Posterior cingulate gyrus (tissue), 11 donors: ENCODE measurements at regions of chr13 and their contacts with region 1.

Region 1: GRCh38 chr13:45047394-45048310 is 58.3 kb downstream of the GPALPP1 start:
- DNase-seq: peak; percentile 66 to 97 (median 82)

Region 2: DNA sequence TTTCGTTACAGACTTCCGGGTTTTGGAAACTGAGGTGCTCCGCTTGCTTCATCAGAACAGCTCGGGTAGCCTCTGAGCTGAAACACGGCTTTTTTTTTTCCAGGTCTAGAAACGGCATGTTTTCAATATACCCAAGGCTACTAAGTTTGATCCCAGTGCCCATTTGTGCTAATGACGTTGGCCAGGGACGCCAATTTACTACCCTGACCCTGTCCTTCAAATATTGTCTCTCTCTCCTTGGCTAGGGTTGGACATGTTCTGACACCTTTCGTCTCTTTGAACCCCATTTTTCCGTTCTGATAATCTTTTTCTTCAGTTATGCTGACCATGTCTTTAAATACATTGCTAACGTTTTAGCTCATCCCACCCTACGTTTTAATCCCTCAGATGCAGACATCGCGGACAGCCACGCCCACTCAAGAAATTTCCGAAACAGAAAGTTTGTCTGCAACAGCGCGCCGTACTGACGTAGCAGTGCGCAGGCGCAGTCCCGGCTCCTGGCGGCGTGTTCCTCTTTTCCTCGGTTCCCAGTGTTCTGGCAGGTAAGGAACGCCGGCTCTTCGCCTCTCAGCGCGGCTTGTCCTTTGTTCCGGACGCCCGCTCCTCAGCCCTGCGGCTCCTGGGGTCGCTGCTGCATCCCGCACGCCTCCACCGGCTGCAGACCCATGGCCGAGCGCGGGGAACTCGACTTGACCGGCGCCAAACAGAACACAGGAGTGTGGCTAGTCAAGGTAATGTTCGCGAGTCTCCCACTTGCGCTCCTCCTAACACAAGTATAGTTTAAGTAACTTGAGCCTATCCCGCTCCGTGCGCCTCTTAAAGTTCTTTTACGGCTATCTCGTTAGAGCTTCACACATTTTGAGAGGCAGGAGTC is 72.6 kb after region 1 on chr13 and contains the start of gene GTF2F2:
- intact Hi-C with region 1: loop called (anchors 5 kb)
- DNase-seq: peak; percentile 73 to 97 (median 84)

Region 3: GRCh38 chr13:45280751-45281634 is 233.3 kb after region 1 on chr13:
- intact Hi-C with region 1: loop called (anchors 1 kb)
- DNase-seq: peak; percentile 70 to 98 (median 88)

Region 4: DNA sequence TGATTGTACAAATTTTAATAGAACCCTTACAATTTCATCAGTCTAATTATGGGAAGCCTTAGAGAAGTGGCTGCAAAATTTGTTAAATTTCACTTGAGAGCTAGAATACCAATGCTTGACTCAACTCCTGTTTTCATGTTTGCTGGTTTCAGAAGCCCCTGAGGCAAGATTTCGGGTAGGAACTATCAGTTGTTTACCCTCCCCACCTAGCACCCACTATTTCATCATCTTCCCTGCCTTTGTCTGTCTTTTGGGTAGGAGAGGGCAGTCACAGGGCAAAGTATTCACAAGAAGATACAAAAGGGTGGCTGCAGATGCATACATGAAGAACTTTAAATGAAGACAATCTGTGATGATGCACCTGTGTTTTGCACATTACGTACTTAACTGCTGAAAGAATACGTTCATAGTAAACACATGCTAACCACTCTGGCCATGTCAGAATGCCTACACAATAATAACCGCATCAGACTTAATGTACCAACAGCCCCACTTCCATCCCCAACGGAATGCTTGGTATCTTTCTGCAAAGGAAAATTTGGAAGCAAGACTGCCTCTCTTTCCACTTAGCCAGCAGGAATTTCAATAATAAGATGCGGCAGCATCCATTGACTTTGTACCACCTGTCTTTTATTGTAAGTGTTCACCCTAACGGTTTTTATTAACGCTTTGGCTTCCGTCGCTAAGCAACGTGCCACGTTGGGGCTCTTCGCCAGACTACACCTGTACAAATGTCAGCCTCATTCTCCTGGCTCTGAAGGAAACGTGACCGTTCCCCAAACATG is 262.9 kb after region 1 on chr13:
- intact Hi-C with region 1: loop called (anchors 1 kb)
- DNase-seq: no peak